SK-N-SH (cell line): ENCODE measurements at regions of chr12 and their contacts with region 1.

Region 1: GRCh38 chr12:49347384-49348237 is 923 bp downstream of the DNAJC22 start:
- DNase-seq: peak; percentile 97
- H3K4me3 ChIP-seq: peak overlapping the region; percentile 19 to 50
- H3K27ac ChIP-seq: no peak overlapping the region
- H3K4me1 ChIP-seq: peaks cover 15 to 38% of the 10 kb centered on the region in 2 experiments; a peak in 2 of 4 replicates
- H3K27me3 ChIP-seq: peaks cover 5% of the 10 kb centered on the region; the same call in 1 of the 2 replicates
- CTCF ChIP-seq: peak; percentile 95
- EP300 ChIP-seq: no peak
- RAD21 ChIP-seq: peak; percentile 34

Region 2: GRCh38 chr12:48084066-48084465 is 1263.5 kb before region 1 on chr12:
- CTCF ChIA-PET with region 1: no interaction called
- POLR2A ChIA-PET with region 1: no interaction called
- DNase-seq: peak; percentile 14
- H3K4me3 ChIP-seq: no peak overlapping the region
- H3K27ac ChIP-seq: no peak overlapping the region
- H3K4me1 ChIP-seq: no peaks in the 10 kb centered on the region
- H3K27me3 ChIP-seq: no peaks in the 10 kb centered on the region
- CTCF ChIP-seq: peak; percentile 59
- EP300 ChIP-seq: no peak
- RAD21 ChIP-seq: peak; percentile 63

Region 3: GRCh38 chr12:49279706-49280159 is 67.9 kb before region 1 on chr12:
- CTCF ChIA-PET with region 1: interaction called, 658 read pairs
- POLR2A ChIA-PET with region 1: no interaction called
- DNase-seq: peak; percentile 25
- H3K4me3 ChIP-seq: no peak overlapping the region
- H3K27ac ChIP-seq: no peak overlapping the region
- H3K4me1 ChIP-seq: peaks cover 0 to 23% of the 10 kb centered on the region in 2 experiments; a peak in 1 of 4 replicates
- H3K27me3 ChIP-seq: no peaks in the 10 kb centered on the region
- CTCF ChIP-seq: no peak
- EP300 ChIP-seq: no peak
- RAD21 ChIP-seq: no peak

Region 4: DNA sequence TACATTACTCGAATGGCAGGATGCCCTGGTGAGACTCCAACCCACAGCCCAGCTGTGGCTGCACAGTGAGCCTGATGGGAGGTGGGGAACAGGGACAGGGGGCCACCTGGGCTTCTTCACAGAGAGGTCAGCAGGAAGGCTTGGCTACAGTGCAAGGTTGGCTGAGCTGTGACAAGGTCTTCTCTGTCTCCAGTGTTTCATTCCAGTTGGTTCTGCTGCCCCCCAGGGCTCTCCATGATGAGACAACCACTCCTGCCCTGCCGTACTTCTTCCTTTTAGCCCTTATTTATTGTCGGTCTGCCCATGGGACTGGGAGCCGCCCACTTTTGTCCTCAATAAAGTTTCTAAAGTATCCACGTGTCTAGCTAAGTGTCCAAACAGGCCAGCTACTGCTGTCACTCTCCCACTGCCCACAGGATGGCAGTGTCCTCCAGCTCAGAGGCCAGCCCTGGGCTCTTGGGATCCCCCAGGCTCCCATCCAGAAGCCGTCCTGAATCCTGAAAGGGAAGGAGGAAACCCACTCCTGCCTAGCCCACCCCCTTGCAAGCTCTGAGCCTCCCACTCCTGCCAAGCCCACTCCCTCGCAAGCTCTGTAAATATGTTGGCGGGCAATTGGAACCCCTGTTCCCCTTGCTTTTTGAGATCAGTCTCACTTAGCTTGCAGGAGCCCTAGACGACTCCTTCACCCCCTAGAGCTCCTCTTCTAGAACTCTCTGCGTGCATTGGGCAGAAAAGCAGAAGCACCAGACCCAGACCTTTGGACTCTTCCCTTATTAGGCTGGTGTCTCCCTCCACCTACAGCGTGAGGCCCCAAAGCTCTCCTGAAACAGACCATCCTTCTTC is 16.0 kb before region 1 on chr12:
- CTCF ChIA-PET with region 1: interaction called, 88 read pairs
- POLR2A ChIA-PET with region 1: interaction called, 3 read pairs
- DNase-seq: peak; percentile 81
- H3K4me3 ChIP-seq: peak overlapping the region in 1 of 2 experiments; percentile 25; a peak in 1 of 4 replicates
- H3K27ac ChIP-seq: no peak overlapping the region
- H3K4me1 ChIP-seq: peaks cover 0 to 2% of the 10 kb centered on the region in 2 experiments; a peak in 1 of 4 replicates
- H3K27me3 ChIP-seq: no peaks in the 10 kb centered on the region
- CTCF ChIP-seq: peak; percentile 84
- EP300 ChIP-seq: no peak
- RAD21 ChIP-seq: peak; percentile 80

Region 5: DNA sequence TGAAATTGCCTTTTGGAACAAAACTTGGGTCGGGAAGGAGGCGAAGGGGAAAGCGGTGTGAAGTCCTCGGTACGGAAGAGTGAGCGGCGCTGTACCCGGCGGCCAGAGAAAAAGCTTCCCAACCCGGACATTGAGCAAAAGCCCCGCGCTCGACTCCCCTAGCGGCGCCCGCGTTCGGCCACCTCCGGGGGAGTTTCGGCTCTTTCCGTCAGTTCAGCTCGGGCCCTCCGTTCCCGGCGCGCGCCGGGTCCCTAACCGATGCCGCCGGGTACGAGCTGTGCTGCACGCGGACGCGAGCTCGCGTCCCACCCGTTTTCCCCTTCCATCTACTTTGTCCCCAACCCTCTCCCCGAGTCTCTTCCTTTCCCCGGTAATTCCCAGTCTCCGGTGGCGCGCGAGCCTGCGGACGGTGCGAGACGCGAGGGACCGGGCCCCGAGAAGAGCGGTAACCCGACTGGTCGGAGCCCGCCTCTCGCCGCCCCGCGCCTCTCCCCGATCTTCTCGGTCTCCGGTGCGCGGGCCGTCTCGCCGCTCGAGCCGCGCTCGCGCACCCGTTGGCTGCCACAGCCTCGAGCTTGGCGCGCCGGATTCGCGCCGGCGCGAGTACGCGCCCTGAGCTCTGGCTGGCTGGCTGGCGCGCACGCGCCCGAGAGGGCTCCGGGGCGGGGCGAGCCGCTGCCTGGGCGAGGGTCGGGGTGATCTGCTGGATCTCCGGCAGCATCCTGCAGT is 19.2 kb after region 1 on chr12:
- CTCF ChIA-PET with region 1: interaction called, 133 read pairs
- POLR2A ChIA-PET with region 1: no interaction called
- DNase-seq: peak; percentile 98
- H3K4me3 ChIP-seq: peak overlapping the region; percentile 79 to 91
- H3K27ac ChIP-seq: peak overlapping the region; percentile 90 to 95
- H3K4me1 ChIP-seq: peaks cover 3 to 6% of the 10 kb centered on the region in 2 experiments; a peak in 3 of 4 replicates
- H3K27me3 ChIP-seq: no peaks in the 10 kb centered on the region
- CTCF ChIP-seq: peak; percentile 37
- EP300 ChIP-seq: peak in 1 of 2 experiments; percentile 15; a peak in 1 of 4 replicates
- RAD21 ChIP-seq: no peak

Region 6: DNA sequence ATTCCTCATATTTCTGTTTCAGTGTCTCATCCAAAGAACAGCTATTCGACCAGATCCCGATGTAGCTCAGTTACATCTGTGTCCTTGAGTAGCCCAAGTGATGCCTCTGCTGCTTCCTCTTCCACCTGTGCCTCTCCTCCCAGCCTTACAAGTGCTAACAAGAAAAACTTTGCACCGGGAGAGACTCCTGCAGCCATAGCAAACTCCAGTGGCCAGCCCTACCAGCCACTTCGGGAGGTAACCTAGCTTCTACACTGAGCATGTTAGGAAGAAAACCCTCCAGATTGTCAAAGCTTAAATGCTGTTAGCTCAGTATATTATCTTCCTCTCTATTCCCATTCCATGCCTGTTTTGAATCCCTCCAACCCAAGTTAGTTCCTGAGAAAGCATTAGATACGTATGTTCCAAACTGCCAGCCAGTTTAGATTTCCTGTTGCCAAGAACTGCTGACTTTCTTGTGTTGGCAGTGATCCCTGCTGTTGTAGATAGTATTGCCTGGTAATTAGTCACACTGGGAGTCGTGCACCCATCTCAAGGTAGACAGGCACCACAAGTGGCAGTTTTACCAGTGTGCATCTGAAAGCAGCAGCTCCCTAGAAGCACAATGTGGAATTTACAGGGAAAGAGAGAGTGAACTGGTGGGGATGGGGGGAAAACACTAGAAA is 177.2 kb after region 1 on chr12:
- CTCF ChIA-PET with region 1: interaction called, 15 read pairs
- POLR2A ChIA-PET with region 1: no interaction called
- DNase-seq: no peak
- H3K4me3 ChIP-seq: no peak overlapping the region
- H3K27ac ChIP-seq: no peak overlapping the region
- H3K4me1 ChIP-seq: peaks cover 0 to 3% of the 10 kb centered on the region in 2 experiments; a peak in 1 of 4 replicates
- H3K27me3 ChIP-seq: no peaks in the 10 kb centered on the region
- CTCF ChIP-seq: no peak
- EP300 ChIP-seq: no peak
- RAD21 ChIP-seq: no peak

Region 7: DNA sequence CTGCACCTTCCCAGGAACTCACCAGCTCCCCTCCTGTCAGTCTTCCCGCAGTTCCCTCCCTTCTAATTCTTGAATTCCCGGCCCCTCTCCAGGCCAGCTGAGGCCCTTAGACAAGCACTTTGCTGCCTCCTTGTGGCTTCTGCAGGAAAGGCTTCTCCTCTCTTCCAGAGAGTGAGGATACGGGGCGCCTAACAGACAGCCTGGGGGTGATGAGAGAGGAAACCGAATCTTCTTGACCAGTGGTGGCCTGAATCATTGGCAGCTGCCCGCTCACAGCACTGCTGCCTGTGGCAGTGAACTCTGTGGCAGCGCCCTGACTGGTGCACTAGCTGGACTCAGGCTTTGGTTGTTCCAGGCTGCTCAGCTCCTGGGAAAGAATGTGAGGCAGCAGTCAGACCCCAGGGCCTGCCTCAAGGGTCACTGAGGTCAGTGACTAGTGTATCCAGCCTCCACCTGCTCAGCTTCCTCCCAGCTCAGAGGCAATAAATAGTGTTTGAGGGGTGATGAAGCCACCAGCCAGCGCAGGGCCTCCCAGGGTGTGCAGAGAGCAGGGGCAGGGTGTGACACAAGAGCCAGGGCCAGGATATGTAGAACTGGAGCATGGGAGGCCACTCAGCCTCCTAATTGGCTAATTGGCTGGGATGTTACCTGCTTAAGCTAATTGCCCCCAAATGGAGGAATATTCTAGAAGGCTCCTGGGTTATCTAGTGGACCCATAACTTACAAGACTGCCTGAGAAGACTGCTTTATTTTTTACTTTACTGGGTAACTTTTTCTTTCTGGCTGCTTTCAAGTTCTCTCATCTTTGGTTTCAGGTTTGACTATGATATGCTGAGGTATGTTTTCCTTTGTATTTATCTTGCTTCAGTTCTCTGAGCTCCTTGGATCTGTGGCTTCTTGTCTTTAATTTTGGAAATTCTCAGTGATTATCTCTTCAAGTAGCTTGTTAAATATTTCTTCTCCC is 233.2 kb after region 1 on chr12:
- CTCF ChIA-PET with region 1: interaction called, 33 read pairs
- POLR2A ChIA-PET with region 1: no interaction called
- DNase-seq: peak; percentile 83
- H3K4me3 ChIP-seq: no peak overlapping the region; a peak in 1 of 4 replicates
- H3K27ac ChIP-seq: no peak overlapping the region; a peak in 1 of 4 replicates
- H3K4me1 ChIP-seq: peaks cover 0 to 18% of the 10 kb centered on the region in 2 experiments; a peak in 1 of 4 replicates
- H3K27me3 ChIP-seq: no peaks in the 10 kb centered on the region
- CTCF ChIP-seq: peak; percentile 88
- EP300 ChIP-seq: no peak; a peak in 1 of 4 replicates
- RAD21 ChIP-seq: peak; percentile 82